ENCODE measurements at regions of chr4 and their contacts with region 1.

Region 1: DNA sequence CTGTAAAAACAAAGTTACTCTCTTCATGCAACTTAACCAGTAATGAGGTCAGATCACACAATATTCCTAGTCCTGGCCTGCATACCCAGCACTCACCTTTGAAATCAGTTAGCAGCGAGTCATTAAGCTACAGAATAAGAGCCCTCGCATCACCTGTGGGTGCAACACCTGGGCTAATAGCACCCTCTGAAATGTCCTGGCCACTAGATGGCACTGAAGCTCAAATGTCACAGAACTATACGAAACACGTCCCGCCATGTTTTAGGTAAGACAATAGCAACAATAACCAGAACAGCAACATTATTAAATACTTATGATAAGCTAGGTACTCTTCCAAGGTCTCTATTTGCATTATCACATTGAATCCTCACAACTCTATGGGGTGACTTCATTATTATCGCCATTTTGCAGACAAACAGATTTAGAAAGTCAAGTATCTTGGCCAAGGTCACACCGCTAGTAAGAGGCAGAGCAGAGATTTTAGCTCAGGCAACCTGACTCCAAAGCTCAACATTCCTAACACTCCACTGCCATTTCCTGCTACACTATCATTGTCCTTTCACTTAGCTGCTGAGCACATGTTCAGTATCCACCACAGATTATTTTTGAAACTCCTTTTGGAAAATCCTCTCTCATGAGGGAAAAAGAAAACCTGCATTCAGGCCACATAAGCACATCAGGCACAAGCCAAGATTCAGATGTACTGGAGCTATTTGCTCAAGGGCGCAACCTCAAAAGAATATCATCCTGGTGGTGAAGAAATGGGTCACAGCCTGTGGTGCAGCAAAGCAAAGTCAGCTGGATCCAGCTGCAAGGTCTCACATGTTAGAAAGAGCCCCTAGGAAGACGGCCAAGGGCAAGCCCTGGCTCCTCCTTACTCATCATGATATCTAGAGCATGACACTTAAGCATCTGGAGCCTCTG is 59.5 kb upstream of the KDR start:
- DNase-seq: no peak
- H3K4me3 ChIP-seq: no peak overlapping the region
- H3K27ac ChIP-seq: peak overlapping the region; percentile 63
- H3K4me1 ChIP-seq: peaks cover 64% of the 10 kb centered on the region
- H3K27me3 ChIP-seq: no peaks in the 10 kb centered on the region
- CTCF ChIP-seq: peak in 1 of 2 donors; percentile 30
- POLR2A ChIP-seq: no peak

Region 2: GRCh38 chr4:54645830-54646229 is 539.0 kb before region 1 on chr4:
- CTCF ChIA-PET with region 1: no interaction called
- POLR2A ChIA-PET with region 1: no interaction called
- dilution Hi-C with region 1: no loop called
- intact Hi-C with region 1: no loop called
- DNase-seq: no peak
- H3K4me3 ChIP-seq: no peak overlapping the region
- H3K27ac ChIP-seq: no peak overlapping the region
- H3K4me1 ChIP-seq: no peaks in the 10 kb centered on the region
- H3K27me3 ChIP-seq: peaks cover 2% of the 10 kb centered on the region in 2 experiments
- CTCF ChIP-seq: no peak
- POLR2A ChIP-seq: no peak

Region 3: GRCh38 chr4:55008166-55009070 is 176.4 kb before region 1 on chr4:
- CTCF ChIA-PET with region 1: interaction called, 12 read pairs
- POLR2A ChIA-PET with region 1: no interaction called
- dilution Hi-C with region 1: no loop called
- intact Hi-C with region 1: loop called (anchors 5 kb)
- DNase-seq: peak; percentile 94
- H3K4me3 ChIP-seq: no peak overlapping the region
- H3K27ac ChIP-seq: peak overlapping the region; percentile 21
- H3K4me1 ChIP-seq: peaks cover 11% of the 10 kb centered on the region
- H3K27me3 ChIP-seq: no peaks in the 10 kb centered on the region
- CTCF ChIP-seq: peak; percentile 41 to 57
- POLR2A ChIP-seq: no peak

Region 4: DNA sequence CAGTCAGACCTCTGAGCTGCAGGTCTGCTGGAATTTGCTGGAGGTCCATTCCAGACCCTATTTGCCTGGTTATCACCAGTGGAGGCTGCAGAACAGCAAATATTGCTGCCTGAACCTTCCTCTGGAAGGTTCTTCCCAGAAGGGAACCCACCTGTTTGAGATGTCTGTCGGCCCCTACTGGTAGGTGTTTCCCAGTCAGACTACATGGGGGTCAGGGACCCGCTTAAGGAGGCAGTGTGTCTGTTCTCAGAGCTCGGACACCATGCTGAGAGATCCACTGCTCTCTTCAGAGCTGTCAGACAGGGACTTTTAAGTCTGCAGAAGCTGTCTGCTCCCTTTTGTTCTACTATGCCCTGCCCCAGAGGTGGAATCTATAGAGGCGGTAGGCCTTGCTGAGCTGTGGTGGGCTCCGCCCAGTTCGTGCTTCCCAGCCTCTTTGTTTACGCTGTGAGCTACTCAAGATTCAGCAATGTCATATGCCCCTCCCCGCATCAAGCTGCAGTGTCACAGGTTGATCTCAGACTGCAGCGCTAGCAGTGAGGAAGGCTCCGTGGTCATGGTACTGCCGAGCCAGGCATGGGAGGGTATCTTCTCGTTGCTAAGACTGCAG is 15.4 kb before region 1 on chr4:
- CTCF ChIA-PET with region 1: interaction called, 72 read pairs
- POLR2A ChIA-PET with region 1: interaction called, 5 read pairs
- dilution Hi-C with region 1: no loop called
- intact Hi-C with region 1: loop called (anchors 1 kb)
- DNase-seq: no peak
- H3K4me3 ChIP-seq: no peak overlapping the region
- H3K27ac ChIP-seq: no peak overlapping the region
- H3K4me1 ChIP-seq: peaks cover 26% of the 10 kb centered on the region
- H3K27me3 ChIP-seq: no peaks in the 10 kb centered on the region
- CTCF ChIP-seq: no peak
- POLR2A ChIP-seq: no peak

Region 5: GRCh38 chr4:55214172-55214571 is 29.3 kb after region 1 on chr4:
- CTCF ChIA-PET with region 1: interaction called, 5 read pairs
- POLR2A ChIA-PET with region 1: no interaction called
- dilution Hi-C with region 1: no loop called
- intact Hi-C with region 1: loop called (anchors 1 kb)
- DNase-seq: peak; percentile 76
- H3K4me3 ChIP-seq: no peak overlapping the region
- H3K27ac ChIP-seq: peak overlapping the region; percentile 66
- H3K4me1 ChIP-seq: peaks cover 20% of the 10 kb centered on the region
- H3K27me3 ChIP-seq: no peaks in the 10 kb centered on the region
- CTCF ChIP-seq: no peak
- POLR2A ChIP-seq: peak; percentile 42

Region 6: DNA sequence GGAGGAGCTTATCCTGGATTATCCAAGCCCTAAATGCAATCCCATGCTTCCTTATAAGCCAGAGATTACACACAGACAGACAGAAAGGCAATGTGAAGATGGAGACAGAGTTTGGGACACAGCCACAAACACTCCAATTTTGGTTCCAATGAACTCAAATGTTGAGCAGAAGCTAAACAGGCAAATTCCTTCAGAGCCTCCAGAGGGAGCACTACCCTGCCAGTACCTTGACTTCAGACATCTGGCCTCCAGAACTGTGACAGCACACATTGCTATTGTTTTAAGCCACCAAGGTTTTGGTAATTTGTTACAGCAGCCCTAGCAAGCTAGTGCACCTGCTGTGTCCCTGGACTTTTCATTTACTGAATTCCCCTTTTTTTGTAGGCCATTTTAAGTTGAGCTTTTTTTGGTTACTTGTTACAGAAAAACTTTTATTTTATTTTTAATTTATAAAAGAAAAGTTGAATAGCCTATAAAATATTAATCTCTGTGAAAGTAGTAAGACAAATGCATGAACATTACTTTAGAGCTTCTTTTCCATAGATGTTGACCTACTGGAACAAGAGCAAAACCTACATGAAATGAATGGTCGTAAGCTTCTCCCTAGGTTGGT is 127.7 kb after region 1 on chr4:
- CTCF ChIA-PET with region 1: interaction called, 28 read pairs
- POLR2A ChIA-PET with region 1: no interaction called
- dilution Hi-C with region 1: no loop called
- intact Hi-C with region 1: no loop called
- DNase-seq: peak; percentile 63
- H3K4me3 ChIP-seq: no peak overlapping the region
- H3K27ac ChIP-seq: no peak overlapping the region
- H3K4me1 ChIP-seq: no peaks in the 10 kb centered on the region
- H3K27me3 ChIP-seq: no peaks in the 10 kb centered on the region
- CTCF ChIP-seq: peak; percentile 60 to 76
- POLR2A ChIP-seq: no peak

Measured in endothelial cell of umbilical vein (primary cell).